ENCODE measurements at regions of chr1 and their contacts with region 1.

Region 1: DNA sequence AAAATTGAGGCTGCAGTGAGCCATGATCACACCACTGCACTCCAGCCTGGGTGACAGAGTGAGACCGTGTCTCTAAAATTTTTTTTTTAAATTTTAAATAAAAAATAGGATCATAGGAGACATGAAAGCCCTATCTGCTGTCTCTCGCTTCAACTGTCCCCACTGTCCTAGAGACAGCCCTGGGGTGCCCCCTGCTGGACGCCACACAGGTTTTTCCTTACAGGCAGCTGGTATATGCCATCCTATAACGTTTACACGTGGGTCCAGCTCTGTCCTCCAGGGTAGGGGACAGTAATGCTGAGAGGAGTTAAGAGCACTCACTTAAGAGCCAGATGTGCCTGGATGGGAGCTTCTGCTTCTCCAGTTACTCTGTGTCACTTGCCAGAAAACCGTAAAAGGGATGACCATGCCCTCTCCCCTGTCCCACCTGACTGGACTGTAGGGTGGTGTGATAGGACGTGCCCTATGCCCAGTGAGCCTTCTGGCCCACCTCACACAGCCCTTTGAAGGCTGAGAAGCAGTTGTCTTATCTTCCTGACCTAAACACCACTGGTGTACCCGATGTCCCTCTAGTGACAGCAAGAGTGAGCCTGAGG is 8.5 kb downstream of the FBXO2 start:
- DNase-seq: peak; percentile 89
- ATAC-seq: peak; percentile 48
- H3K4me3 Mint-ChIP-seq: no peak overlapping the region
- H3K27ac Mint-ChIP-seq: no peak overlapping the region
- H3K4me1 Mint-ChIP-seq: peaks cover 13% of the 10 kb centered on the region
- H3K27me3 Mint-ChIP-seq: peaks cover 7% of the 10 kb centered on the region
- CTCF ChIP-seq: peak; percentile 84

Region 2: GRCh38 chr1:11248155-11248554 is 397.6 kb before region 1 on chr1:
- CTCF ChIA-PET with region 1: interaction called, 40 read pairs
- POLR2A ChIA-PET with region 1: no interaction called
- DNase-seq: no peak
- ATAC-seq: peak; percentile 65
- H3K4me3 Mint-ChIP-seq: no peak overlapping the region
- H3K27ac Mint-ChIP-seq: 0 out of 2 replicates have a peak overlapping the region, but pooled peaks have one; percentile 68
- H3K4me1 Mint-ChIP-seq: no peaks in the 10 kb centered on the region
- H3K27me3 Mint-ChIP-seq: no peaks in the 10 kb centered on the region
- CTCF ChIP-seq: no peak

Region 3: GRCh38 chr1:11335417-11336056 is 310.2 kb before region 1 on chr1:
- CTCF ChIA-PET with region 1: interaction called, 12 read pairs
- POLR2A ChIA-PET with region 1: no interaction called
- DNase-seq: no peak
- ATAC-seq: no peak
- H3K4me3 Mint-ChIP-seq: no peak overlapping the region
- H3K27ac Mint-ChIP-seq: 0 out of 2 replicates have a peak overlapping the region, but pooled peaks have one; percentile 60
- H3K4me1 Mint-ChIP-seq: peaks cover 41% of the 10 kb centered on the region
- H3K27me3 Mint-ChIP-seq: peaks cover 5% of the 10 kb centered on the region; the same call in 1 of the 2 replicates
- CTCF ChIP-seq: no peak

Region 4: GRCh38 chr1:11594222-11594621 is 51.5 kb before region 1 on chr1:
- CTCF ChIA-PET with region 1: interaction called, 10 read pairs
- POLR2A ChIA-PET with region 1: no interaction called
- DNase-seq: peak; percentile 53
- ATAC-seq: peak; percentile 77
- H3K4me3 Mint-ChIP-seq: no peak overlapping the region
- H3K27ac Mint-ChIP-seq: no peak overlapping the region
- H3K4me1 Mint-ChIP-seq: peaks cover 23% of the 10 kb centered on the region
- H3K27me3 Mint-ChIP-seq: no peaks in the 10 kb centered on the region
- CTCF ChIP-seq: no peak

Region 5: DNA sequence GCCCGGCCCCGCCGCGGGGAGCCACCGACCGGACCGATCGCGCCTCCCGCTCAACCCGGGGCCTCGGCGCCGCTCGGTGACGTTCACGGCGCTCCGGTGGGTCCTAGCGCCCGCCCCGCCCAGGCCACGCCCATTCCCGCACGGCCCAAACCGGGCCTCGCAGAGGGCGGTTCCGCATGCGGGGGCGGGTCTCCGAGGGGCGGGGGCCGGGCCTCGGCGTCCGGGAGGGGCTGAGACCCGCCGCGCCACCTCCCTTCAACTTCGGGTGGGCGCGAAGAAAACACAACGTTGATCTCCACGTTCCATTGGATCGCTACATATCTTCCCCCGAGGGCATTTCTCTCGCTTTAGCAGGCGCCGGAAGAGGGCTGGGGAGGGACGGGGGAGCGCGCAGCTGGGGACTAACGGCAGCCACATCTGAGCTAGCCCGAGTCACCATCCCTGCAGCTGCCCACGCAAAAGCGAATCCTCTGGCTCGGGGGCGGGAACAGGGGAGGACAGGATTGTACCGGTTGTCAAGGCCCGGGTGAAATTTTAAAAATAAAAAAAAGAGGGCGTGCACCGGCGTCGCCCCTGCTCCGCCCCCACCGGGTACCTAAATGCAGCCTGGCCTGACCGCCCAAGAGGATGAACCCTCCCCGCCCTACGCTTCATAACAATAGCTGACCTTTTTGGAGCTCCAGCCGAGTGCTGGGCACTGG is 35.5 kb after region 1 on chr1 and contains the start of gene MAD2L2:
- CTCF ChIA-PET with region 1: interaction called, 16 read pairs
- POLR2A ChIA-PET with region 1: no interaction called
- DNase-seq: peak; percentile 86
- ATAC-seq: peak; percentile 54
- H3K4me3 Mint-ChIP-seq: peak within 1 kb of the TSS; percentile 83
- H3K27ac Mint-ChIP-seq: peak within 1 kb of the TSS; percentile 100
- H3K4me1 Mint-ChIP-seq: peaks cover 61% of the 10 kb centered on the region
- H3K27me3 Mint-ChIP-seq: no peaks in the 10 kb centered on the region
- CTCF ChIP-seq: no peak
- total RNA-seq, gene MAD2L2: 283 to 312 TPM (median 305 TPM) in 3 replicates

Region 6: DNA sequence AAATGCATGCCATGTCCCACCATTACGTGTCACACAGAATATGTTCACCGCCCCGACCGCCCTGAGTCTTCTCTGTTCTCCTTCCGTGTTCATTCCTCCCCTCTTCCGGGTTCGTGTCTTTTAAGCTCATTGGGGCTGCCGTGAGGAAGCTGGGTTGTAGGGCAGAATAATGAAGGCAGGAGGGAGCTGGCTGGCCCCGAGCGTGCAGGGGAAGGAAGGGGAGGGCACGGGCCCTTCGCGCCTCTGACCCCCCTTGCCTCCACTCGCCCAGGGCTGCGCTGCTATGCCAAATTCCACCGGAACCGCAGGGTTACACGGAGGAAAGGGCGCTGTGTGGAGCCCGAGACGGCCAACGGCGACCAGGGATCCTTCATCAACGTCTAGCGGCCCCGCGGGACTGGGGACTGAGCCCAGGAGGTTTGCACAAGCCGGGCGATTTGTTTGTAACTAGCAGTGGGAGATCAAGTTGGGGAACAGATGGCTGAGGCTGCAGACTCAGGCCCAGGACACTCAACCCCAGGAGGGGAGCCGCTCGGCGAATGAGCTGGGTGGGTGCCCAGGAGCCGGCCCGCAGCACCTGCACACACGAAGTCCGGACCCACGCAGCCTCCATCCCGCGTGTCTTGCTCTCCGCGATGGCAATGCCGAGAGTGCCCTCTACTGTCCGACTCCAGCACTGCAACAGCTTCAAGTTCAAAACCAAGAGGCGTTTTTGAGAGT is 73.7 kb after region 1 on chr1:
- CTCF ChIA-PET with region 1: interaction called, 21 read pairs
- POLR2A ChIA-PET with region 1: interaction called, 3 read pairs
- DNase-seq: peak; percentile 81
- ATAC-seq: peak; percentile 75
- H3K4me3 Mint-ChIP-seq: peak overlapping the region; percentile 51
- H3K27ac Mint-ChIP-seq: no peak overlapping the region
- H3K4me1 Mint-ChIP-seq: peaks cover 9% of the 10 kb centered on the region
- H3K27me3 Mint-ChIP-seq: no peaks in the 10 kb centered on the region; the same call in 1 of the 2 replicates
- CTCF ChIP-seq: peak; percentile 96

Region 7: DNA sequence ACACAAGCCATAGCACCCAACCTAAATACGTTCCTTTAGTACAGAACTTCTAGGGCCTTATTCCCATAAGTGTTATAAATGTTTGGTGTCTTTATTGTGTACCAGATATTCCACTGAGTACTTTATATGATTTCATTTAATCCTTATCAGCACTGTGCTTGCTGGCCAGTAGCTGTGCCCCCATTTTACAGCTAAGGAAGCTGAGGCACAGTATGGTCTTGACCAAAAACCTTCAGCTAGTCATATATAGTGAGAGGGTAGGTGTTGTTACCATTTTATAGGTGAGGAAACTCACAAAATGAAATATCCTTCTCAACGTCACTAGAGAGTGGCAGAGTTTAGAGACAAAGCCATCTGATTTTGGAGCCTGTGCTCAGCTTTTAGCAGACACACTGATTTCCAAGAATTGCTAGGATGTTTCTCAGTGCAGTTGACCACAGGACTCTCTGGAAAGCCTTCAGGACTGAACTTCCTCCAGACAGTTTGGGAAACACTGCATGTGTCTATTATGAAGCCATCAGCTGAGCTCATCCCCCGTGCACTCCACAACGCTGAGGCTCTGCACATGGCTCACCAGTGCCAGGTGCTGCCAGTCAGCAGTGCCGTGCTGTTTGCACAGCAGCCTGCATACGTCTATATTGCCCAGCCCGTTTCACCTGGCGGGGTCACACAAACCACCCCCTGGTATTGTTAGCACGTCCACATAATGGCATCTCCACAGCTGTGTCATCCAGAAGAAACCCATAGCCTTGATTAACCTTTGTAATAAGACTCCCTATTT is 186.4 kb after region 1 on chr1:
- CTCF ChIA-PET with region 1: no interaction called
- POLR2A ChIA-PET with region 1: no interaction called
- DNase-seq: no peak
- ATAC-seq: no peak
- H3K4me3 Mint-ChIP-seq: no peak overlapping the region
- H3K27ac Mint-ChIP-seq: no peak overlapping the region
- H3K4me1 Mint-ChIP-seq: no peaks in the 10 kb centered on the region
- H3K27me3 Mint-ChIP-seq: no peaks in the 10 kb centered on the region
- CTCF ChIP-seq: no peak